PC-9 (cell line): ENCODE measurements at regions of chr1 and their contacts with region 1.

Region 1: GRCh38 chr1:202241376-202242079 is 47.9 kb downstream of the LGR6 start:
- DNase-seq: peak; percentile 47 to 73
- H3K4me3 ChIP-seq: no peak overlapping the region
- H3K27ac ChIP-seq: no peak overlapping the region
- H3K4me1 ChIP-seq: peaks cover 20% of the 10 kb centered on the region
- H3K27me3 ChIP-seq: peaks cover 6% of the 10 kb centered on the region; the same call in 1 of the 2 replicates
- CTCF ChIP-seq: no peak

Region 2: DNA sequence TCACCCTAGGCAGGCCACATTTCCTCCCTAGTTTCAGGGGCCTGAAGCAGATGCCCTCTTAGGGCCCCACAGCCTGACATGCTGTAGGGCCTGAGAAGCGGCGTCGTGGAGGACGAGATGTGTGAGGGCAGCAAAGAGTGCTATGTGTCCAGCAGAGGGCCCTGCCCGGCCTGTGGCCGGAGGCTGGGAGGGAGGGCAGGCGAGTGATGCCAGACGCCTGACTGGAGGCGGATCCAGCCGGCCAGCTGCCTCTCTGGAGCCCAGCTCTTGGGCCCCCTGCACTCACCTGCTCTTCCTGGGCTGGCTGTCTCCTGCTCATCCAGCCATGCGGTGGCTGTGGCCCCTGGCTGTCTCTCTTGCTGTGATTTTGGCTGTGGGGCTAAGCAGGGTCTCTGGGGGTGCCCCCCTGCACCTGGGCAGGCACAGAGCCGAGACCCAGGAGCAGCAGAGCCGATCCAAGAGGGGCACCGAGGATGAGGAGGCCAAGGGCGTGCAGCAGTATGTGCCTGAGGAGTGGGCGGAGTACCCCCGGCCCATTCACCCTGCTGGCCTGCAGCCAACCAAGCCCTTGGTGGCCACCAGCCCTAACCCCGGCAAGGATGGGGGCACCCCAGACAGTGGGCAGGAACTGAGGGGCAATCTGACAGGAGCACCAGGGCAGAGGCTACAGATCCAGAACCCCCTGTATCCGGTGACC is 118.7 kb before region 1 on chr1 and contains the start of gene GPR37L1:
- CTCF ChIA-PET with region 1: no interaction called
- POLR2A ChIA-PET with region 1: no interaction called
- intact Hi-C with region 1: no loop called
- DNase-seq: peak; percentile 51 to 65
- H3K4me3 ChIP-seq: no peak within 1 kb of the TSS
- H3K27ac ChIP-seq: no peak within 1 kb of the TSS
- H3K4me1 ChIP-seq: peaks cover 11% of the 10 kb centered on the region
- H3K27me3 ChIP-seq: no peaks in the 10 kb centered on the region
- CTCF ChIP-seq: peak; percentile 57
- total RNA-seq, gene GPR37L1: 0.30 and 0.33 TPM in 2 replicates

Region 3: DNA sequence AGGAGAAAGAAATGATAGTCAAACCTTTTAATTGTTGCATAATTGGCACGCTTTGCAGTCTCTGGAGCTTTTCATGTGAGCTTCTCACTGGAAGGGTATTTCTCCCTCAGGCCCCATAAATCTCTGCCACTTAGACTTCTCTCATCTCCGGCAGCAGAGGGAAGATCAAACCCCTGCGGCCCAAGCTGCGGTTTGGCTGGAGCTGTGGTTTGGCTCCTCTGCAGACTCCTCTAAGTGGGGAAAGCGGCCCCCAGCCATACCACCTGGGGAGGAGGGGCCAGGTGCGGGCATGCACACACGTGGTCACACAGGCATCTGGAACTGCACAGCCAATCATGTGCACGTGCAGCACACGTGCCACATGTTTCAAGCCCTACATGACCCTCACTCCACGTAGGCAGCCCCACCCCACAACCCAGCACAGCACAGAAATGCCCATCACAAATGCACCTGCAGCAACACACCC is 41.9 kb after region 1 on chr1:
- CTCF ChIA-PET with region 1: no interaction called
- POLR2A ChIA-PET with region 1: interaction called, 39 read pairs
- intact Hi-C with region 1: loop called (anchors 2 kb)
- DNase-seq: peak; percentile 88 to 91
- H3K4me3 ChIP-seq: no peak overlapping the region
- H3K27ac ChIP-seq: peak overlapping the region; percentile 39; the same call in 1 of the 2 replicates
- H3K4me1 ChIP-seq: peaks cover 39% of the 10 kb centered on the region
- H3K27me3 ChIP-seq: no peaks in the 10 kb centered on the region
- CTCF ChIP-seq: no peak